Activated CD8-positive, alpha-beta T cell treated with anti-CD3 and anti-CD28 coated beads for 36 hours (primary cell): ENCODE measurements at regions of chr7 and their contacts with region 1.

Region 1: DNA sequence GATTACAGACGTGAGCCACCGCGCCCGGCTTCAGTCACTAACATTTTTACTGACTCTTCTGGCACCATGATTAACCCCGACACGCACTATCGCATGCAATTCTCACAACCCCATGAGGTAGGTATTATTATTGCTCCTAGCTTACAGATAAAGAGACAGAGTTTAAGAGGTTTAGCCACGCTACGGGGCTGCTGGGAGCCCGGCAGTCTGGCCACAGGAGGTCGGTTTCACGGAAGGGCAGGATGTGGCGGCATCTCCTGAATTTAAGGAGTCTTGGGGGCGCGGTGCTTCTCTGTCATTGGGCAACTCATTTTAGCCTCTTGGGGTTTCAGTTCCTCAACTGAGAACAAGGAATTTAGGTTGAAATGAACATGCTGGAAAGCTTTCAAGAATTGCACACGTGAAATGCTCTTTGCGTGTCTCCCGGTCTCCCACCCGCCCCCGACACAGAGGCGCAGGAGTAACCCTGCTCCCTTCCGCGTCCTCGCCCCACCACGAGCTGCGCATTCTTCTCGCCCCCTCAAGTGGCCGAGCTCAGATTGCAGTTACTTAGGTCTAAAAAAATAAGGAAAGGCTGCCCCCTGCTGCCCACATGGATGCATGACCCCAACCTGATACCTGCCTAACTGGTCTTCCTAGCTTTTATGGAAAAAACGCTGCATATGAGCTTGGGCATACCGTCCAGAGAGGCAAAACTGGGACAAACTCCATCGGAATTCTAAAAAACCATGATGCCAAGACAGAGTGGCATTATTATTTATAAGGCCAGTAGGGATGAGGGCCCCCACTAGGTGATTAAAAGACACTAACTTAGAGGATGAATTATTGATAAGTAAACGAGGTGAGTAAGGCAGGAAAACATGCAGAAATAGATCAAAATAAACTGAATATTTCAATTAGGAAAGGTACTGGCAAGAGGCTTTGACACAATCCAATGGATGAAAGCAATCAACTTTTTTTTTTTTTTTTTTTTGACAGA is 12.4 kb downstream of the PRSS2 start:
- DNase-seq: peak; percentile 90
- ATAC-seq: peak; percentile 47
- H3K4me3 Mint-ChIP-seq: peak overlapping the region; percentile 66
- H3K27ac Mint-ChIP-seq: peak overlapping the region; percentile 81
- H3K4me1 Mint-ChIP-seq: peaks cover 6% of the 10 kb centered on the region
- H3K27me3 Mint-ChIP-seq: no peaks in the 10 kb centered on the region
- CTCF ChIP-seq: peak; percentile 69

Region 2: GRCh38 chr7:142632291-142633134 is 150.7 kb before region 1 on chr7:
- CTCF ChIA-PET with region 1: interaction called, 54 read pairs
- POLR2A ChIA-PET with region 1: interaction called, 8 read pairs
- intact Hi-C with region 1: loop called (anchors 5 kb)
- DNase-seq: peak; percentile 65
- ATAC-seq: peak; percentile 76
- H3K4me3 Mint-ChIP-seq: no peak overlapping the region
- H3K27ac Mint-ChIP-seq: peak overlapping the region; percentile 7
- H3K4me1 Mint-ChIP-seq: peaks cover 9% of the 10 kb centered on the region
- H3K27me3 Mint-ChIP-seq: peaks cover 8% of the 10 kb centered on the region
- CTCF ChIP-seq: peak; percentile 59

Region 3: DNA sequence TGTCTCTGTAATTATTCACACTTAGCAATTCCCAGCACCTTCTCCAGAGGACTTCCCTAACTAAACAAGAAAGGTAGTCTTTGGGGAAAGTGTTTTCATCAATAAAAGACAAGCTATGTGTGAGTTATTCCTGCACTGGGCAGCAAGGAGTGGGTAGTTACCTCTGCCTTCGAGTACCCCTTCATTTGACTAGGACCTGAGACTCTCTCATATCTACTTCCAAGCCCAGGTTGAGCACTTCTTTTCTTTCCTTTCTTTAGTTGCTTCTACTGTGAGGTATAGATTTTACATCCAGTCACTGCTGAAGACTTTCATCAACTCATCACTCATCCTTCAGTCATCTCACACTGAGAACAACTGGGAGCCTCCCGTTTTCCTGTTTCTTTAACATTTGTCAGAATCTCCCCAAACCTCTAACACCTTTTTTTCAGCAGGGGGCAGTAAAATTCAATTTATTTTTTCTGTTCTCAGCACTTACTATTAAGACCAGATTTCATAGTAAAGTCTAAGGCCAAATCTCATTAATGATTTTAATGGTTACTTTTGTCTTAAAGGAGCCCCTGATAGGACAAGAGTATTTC is 114.0 kb before region 1 on chr7:
- CTCF ChIA-PET with region 1: interaction called, 25 read pairs
- POLR2A ChIA-PET with region 1: no interaction called
- intact Hi-C with region 1: loop called (anchors 1 kb)
- DNase-seq: no peak
- ATAC-seq: peak; percentile 49
- H3K4me3 Mint-ChIP-seq: no peak overlapping the region
- H3K27ac Mint-ChIP-seq: no peak overlapping the region
- H3K4me1 Mint-ChIP-seq: peaks cover 22% of the 10 kb centered on the region
- H3K27me3 Mint-ChIP-seq: no peaks in the 10 kb centered on the region
- CTCF ChIP-seq: peak; percentile 43

Region 4: DNA sequence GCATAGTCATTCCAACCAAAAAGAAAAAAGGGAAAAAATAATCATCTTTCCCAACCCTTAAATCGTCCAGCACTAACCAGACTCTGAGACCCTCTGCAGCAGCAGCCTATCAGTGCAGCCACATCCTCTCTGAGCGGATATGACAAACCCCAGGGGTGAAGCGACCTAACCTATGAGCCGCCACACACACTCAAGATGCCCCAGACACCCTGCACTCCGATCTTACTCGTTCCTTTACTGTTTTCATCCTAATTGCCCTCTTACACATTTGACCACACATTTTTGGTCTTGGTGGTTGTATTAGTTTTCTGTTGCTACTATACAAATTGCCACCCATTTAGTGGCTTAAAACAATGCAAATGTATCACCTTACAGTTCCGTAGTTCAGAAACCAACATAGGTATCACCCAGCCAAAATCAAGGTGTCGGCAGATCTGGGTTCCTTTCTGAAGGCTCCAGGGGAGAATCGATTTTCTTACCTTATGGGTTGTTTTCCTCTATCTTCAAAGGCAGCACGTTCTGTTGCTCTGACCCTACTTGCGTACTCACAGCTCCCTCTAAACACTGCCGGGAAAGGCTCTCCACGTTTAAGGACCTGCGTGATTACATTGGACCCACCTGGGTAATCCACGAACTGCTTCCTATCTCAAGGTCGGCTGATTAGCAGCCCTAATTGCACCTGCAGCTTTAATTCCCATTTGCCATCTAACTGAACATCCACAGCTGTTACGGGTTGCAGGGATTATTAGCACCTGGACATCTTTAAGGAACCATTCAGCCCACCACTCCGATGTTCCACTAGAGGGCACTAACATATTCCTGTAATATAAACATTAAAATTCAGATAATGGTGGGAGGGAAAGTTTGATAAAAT is 71.2 kb before region 1 on chr7:
- CTCF ChIA-PET with region 1: interaction called, 30 read pairs
- POLR2A ChIA-PET with region 1: interaction called, 3 read pairs
- intact Hi-C with region 1: loop called (anchors 2 kb)
- DNase-seq: peak; percentile 62
- ATAC-seq: peak; percentile 90
- H3K4me3 Mint-ChIP-seq: peak overlapping the region; percentile 82
- H3K27ac Mint-ChIP-seq: peak overlapping the region; percentile 90
- H3K4me1 Mint-ChIP-seq: peaks cover 50% of the 10 kb centered on the region
- H3K27me3 Mint-ChIP-seq: no peaks in the 10 kb centered on the region
- CTCF ChIP-seq: peak; percentile 66

Region 5: GRCh38 chr7:142817506-142817905 is 34.3 kb after region 1 on chr7:
- CTCF ChIA-PET with region 1: interaction called, 117 read pairs
- POLR2A ChIA-PET with region 1: interaction called, 1,391 read pairs
- intact Hi-C with region 1: no loop called
- DNase-seq: no peak
- ATAC-seq: no peak
- H3K4me3 Mint-ChIP-seq: no peak overlapping the region
- H3K27ac Mint-ChIP-seq: no peak overlapping the region
- H3K4me1 Mint-ChIP-seq: peaks cover 19% of the 10 kb centered on the region
- H3K27me3 Mint-ChIP-seq: peaks cover 5% of the 10 kb centered on the region
- CTCF ChIP-seq: no peak